CD8-positive, alpha-beta memory T cell (primary cell): ENCODE measurements at regions of chr2 and their contacts with region 1.

Region 1: DNA sequence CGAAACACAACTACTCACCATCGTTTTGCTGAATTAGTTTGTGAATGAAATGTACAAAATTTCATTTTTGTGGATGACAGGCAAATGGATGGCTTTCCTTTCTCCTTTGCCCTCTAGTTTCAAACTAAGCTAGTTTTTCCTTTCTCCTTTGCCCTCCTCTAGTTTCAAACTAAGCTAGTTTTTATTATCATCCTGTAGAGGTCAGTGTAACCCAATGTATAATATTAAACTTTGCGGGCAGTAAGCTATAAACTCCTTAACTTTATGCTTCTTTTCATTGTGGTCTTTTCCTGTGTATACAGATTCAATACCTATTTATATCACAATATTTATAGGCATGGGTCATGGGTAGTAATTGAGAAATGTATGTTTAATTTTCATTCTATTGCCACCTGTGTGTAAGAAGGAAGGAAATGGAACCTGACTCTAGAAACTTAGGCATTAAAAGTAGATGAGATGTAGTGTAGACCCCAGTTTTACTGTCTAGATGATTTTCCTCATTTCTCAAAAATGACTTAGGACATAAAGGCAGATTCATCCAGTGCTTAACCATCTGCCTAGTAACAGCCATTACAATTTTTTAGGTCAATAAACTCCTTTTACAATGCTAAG is 58.1 kb downstream of the MAP3K19 start:
- DNase-seq: peak in 2 of 5 donors; percentile 9 to 14
- H3K4me3 ChIP-seq: no peak overlapping the region
- H3K4me3 Mint-ChIP-seq: no peak overlapping the region
- H3K27ac ChIP-seq: no peak overlapping the region
- H3K27ac Mint-ChIP-seq: no peak overlapping the region
- H3K4me1 ChIP-seq: no peaks in the 10 kb centered on the region
- H3K4me1 Mint-ChIP-seq: no peaks in the 10 kb centered on the region
- H3K27me3 ChIP-seq: no peaks in the 10 kb centered on the region
- H3K27me3 Mint-ChIP-seq: peaks cover 8 to 29% of the 10 kb centered on the region in 2 donors

Region 2: DNA sequence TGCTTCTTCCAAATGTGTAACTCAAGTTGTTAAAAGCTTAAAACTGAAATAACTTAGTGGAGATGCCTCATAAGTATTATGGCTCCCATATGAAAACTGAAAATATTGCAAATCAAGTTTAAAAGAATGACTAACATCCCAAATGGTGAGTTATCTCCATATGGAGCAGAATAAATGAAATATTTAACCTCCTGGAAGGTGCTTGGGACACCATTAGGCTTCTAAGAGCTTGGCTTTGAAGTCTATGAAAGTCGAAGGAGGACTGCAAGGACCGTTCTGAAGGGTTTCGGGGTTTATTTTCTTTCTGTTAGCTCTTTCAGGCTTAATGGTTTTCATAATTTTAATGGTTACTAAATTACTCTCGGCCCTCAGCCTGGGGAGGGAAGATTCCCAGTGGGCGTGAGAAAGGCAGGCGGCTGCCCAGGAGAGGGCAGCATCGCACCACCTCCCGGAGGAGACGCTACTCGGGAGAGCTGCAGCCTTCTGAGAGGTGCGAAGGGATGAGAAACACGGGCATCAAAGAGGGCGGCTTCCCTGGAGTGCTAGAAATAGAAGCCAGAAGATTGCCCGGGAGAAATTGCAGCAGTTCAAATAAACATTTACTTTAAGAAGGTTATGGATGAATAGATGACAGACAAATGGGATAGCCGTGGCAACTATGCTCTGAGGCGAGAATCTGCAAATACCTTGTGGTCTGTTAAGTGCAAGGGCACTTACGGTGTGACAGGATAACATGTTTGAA is 15.1 kb after region 1 on chr2:
- CTCF ChIA-PET with region 1: interaction called, 15 read pairs
- POLR2A ChIA-PET with region 1: no interaction called
- DNase-seq: peak; percentile 46 to 77 (median 55)
- H3K4me3 ChIP-seq: no peak overlapping the region
- H3K4me3 Mint-ChIP-seq: no peak overlapping the region
- H3K27ac ChIP-seq: no peak overlapping the region
- H3K27ac Mint-ChIP-seq: peak overlapping the region in 2 of 8 donors; percentile 32 to 83
- H3K4me1 ChIP-seq: peaks cover 6% of the 10 kb centered on the region
- H3K4me1 Mint-ChIP-seq: peaks cover 4 to 6% (median 6%) of the 10 kb centered on the region in 3 donors
- H3K27me3 ChIP-seq: peaks cover 8% of the 10 kb centered on the region
- H3K27me3 Mint-ChIP-seq: peaks cover 13 to 32% of the 10 kb centered on the region in 2 donors

Region 3: DNA sequence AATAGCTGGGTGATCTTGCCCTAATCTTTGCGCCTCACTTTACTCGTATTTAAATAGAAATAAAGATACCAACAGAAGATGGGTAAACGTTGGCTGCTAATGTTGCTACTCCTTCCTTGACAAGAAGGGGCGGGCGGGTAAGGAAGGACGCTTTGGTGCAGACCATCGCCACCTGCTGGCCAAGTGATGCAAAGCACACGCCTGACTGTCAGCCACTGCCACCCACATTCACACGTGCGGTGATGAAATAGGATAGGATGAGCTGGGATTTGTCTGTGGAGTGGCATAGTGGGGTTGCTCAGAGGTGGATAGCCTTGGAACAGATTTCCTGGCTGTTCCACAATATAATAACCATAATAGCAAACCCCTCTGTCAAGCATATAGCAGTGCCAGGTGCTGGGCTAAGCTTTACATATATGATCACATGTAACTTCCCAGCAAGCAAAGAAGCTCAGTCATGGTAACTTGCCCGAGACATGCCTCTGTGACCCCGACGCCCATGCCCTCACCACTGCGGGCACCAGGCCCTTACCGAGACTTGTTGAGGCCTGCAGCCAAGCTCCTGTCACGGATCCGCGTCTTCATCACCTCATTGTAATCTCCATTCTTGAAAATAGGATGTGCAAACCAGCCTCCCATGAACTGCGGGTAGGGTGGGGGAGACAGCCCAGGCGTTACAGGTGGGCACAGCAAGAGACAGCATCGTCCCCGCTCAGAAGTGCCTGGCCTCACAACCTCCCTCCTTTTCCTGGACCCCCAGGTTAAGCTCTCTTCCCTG is 808.6 kb after region 1 on chr2:
- CTCF ChIA-PET with region 1: interaction called, 15 read pairs
- POLR2A ChIA-PET with region 1: no interaction called
- DNase-seq: peak; percentile 53 to 78 (median 66)
- H3K4me3 ChIP-seq: no peak overlapping the region
- H3K4me3 Mint-ChIP-seq: peak overlapping the region in 1 of 7 donors; percentile 56
- H3K27ac ChIP-seq: no peak overlapping the region
- H3K27ac Mint-ChIP-seq: no peak overlapping the region
- H3K4me1 ChIP-seq: peaks cover 7% of the 10 kb centered on the region
- H3K4me1 Mint-ChIP-seq: peaks cover 4 to 12% (median 6%) of the 10 kb centered on the region in 3 donors
- H3K27me3 ChIP-seq: no peaks in the 10 kb centered on the region
- H3K27me3 Mint-ChIP-seq: peaks cover 0 to 2% of the 10 kb centered on the region in 2 donors